ENCODE measurements at regions of chr6 and their contacts with region 1.

Region 1: DNA sequence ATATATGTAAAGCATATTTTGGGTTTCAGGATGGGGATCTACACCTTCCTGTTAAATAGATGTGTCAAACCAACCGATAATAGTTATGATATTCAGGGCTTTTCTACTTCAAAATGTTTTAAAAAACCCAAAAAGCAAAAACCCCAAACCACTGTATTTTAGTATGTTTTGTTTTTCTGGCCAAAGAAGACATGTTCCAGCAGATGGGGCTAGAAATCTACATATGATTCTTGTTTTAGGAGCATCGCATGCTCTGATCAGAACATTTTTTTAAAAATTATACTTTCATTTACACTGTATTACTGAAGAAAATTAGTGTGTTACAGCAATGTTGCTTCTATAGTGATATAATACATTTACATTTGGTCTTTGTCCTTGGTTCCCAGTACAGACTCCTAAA is 11.0 kb downstream of the RMND1 start:
- DNase-seq: no peak
- H3K4me3 ChIP-seq: no peak overlapping the region
- H3K27ac ChIP-seq: no peak overlapping the region
- H3K4me1 ChIP-seq: no peaks in the 10 kb centered on the region
- H3K27me3 ChIP-seq: no peaks in the 10 kb centered on the region
- CTCF ChIP-seq: no peak
- EP300 ChIP-seq: no peak
- POLR2A ChIP-seq: no peak
- RAD21 ChIP-seq: peak; percentile 9 to 14; a peak in 1 of 4 replicates

Region 2: DNA sequence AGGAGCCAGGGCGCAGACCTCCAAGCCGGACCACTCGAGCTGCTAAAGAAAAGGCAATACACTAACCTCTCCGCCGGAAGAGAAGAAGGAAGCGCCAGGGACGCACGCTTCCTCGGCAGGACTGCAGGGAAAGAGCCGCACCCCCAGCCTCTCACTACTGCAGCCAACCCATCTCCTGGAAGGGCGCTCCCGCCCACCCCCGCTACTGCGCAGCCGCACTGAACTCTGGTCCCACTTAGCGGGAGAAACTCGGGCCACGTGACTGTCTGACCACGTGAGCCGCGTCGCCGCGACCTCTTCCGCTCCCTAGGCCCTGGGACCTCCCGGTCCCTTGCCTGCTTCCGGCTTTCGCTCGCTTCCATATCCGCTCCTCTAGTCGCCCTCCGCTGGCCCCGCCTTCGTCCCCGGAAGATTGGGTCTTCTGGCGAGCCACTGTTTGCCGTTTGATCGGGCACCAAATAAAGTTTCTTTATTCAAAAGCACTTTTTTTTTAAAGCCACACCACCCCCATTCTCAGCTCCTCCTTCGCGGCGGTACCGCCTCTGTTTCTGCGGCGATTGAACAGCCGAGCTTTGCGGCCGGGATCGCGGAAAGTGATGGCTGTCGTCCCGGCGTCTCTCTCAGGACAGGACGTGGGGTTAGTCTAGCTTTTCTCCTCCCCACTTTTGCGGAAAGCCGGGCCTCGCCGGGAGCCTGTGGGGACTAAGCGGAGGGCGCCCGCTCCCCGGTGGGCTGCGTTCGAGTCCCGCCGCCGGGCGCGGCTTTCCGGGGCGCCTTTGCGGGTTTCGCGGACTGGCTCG is 11.2 kb after region 1 on chr6 and contains the start of gene RMND1:
- CTCF ChIA-PET with region 1: interaction called, 11 read pairs
- POLR2A ChIA-PET with region 1: interaction called, 18 read pairs
- DNase-seq: peak; percentile 98 to 100
- H3K4me3 ChIP-seq: peak within 1 kb of the TSS; percentile 86 to 92 (median 89)
- H3K27ac ChIP-seq: peak within 1 kb of the TSS; percentile 78
- H3K4me1 ChIP-seq: peaks cover 0 to 3% (median 0%) of the 10 kb centered on the region in 4 experiments; a peak in 1 of 7 replicates
- H3K27me3 ChIP-seq: no peaks in the 10 kb centered on the region
- CTCF ChIP-seq: no peak
- EP300 ChIP-seq: peak in 1 of 2 experiments; percentile 92; a peak in 1 of 3 replicates
- POLR2A ChIP-seq: peak; percentile 84 to 89
- RAD21 ChIP-seq: no peak
- total RNA-seq, gene RMND1: 21.9 and 24.0 TPM in 2 replicates

Region 3: DNA sequence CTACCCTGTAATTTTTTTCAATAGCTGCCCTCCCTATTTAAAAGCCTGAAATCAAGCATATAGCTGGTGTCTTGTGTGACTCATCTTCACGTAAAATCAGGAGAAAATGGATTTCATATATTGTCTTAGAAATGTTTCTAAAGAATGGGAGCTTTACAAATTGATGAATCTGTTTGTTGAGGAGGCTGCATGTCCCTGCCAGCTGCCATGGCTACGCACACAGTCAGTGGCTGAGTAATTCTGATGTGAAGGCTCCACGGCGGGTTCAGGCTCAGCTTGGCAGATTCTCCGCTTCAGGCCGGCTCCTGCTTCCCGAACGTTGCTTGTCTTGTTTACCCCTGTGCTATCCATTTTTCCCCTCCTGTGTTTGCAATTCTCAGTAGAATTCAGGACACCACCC is 135.7 kb after region 1 on chr6:
- CTCF ChIA-PET with region 1: no interaction called
- POLR2A ChIA-PET with region 1: no interaction called
- DNase-seq: no peak
- H3K4me3 ChIP-seq: no peak overlapping the region
- H3K27ac ChIP-seq: no peak overlapping the region
- H3K4me1 ChIP-seq: no peaks in the 10 kb centered on the region
- H3K27me3 ChIP-seq: no peaks in the 10 kb centered on the region
- CTCF ChIP-seq: no peak
- EP300 ChIP-seq: no peak
- POLR2A ChIP-seq: no peak
- RAD21 ChIP-seq: no peak